ENCODE measurements at regions of chr11 and their contacts with region 1.

Region 1: DNA sequence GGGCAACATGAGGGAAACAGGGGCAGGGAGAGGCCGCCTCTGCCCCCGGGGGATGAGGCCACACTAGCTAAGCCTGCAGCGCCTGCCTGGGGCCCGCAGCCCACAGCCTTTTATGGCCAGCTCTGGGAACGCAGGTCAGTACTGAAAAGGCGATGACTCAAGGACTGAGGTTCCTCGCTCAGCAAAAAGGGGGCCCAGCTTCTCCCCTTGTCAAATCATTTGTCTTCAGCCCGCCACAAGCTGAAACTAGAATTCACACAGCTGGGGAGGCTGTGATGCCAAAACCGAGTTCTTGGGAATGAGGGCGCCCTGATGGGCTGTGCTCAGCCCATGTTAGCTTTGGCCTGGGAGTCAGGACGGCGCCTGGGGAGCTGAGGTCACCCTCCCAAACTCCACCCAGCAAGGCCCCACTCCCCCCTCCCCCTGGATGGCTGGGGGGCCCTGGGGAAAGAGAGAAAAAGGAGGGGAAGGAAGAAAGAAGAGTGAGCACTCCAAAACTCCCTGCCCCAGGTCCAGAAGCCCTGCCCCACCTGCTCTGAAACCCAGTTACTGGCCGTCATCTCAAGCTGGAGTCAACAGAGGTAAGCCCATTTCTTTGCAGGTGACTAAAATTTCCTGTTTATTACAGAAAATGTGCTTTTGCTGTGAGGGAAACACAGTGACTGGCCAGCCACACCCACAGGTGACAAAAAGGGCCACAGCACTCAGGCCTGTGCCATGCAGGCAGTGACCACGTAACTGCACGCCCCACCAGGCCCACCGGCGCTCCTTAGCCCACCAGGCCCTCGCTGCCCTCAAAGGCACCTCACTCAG is 13.7 kb downstream of the EHD1 start:
- DNase-seq: peak; percentile 84
- H3K4me3 Mint-ChIP-seq: peak overlapping the region; percentile 56
- H3K27ac Mint-ChIP-seq: peak overlapping the region; percentile 97
- H3K4me1 Mint-ChIP-seq: peaks cover 95% of the 10 kb centered on the region
- H3K27me3 Mint-ChIP-seq: no peaks in the 10 kb centered on the region

Region 2: GRCh38 chr11:64240394-64241174 is 624.1 kb before region 1 on chr11 and contains the start of gene FKBP2:
- CTCF ChIA-PET with region 1: no interaction called
- intact Hi-C with region 1: no loop called
- DNase-seq: peak; percentile 97
- H3K4me3 Mint-ChIP-seq: peak within 1 kb of the TSS; percentile 92
- H3K27ac Mint-ChIP-seq: peak within 1 kb of the TSS; percentile 98
- H3K4me1 Mint-ChIP-seq: peaks cover 35% of the 10 kb centered on the region
- H3K27me3 Mint-ChIP-seq: no peaks in the 10 kb centered on the region
- total RNA-seq, gene FKBP2: 17.2 to 20.0 TPM

Region 3: DNA sequence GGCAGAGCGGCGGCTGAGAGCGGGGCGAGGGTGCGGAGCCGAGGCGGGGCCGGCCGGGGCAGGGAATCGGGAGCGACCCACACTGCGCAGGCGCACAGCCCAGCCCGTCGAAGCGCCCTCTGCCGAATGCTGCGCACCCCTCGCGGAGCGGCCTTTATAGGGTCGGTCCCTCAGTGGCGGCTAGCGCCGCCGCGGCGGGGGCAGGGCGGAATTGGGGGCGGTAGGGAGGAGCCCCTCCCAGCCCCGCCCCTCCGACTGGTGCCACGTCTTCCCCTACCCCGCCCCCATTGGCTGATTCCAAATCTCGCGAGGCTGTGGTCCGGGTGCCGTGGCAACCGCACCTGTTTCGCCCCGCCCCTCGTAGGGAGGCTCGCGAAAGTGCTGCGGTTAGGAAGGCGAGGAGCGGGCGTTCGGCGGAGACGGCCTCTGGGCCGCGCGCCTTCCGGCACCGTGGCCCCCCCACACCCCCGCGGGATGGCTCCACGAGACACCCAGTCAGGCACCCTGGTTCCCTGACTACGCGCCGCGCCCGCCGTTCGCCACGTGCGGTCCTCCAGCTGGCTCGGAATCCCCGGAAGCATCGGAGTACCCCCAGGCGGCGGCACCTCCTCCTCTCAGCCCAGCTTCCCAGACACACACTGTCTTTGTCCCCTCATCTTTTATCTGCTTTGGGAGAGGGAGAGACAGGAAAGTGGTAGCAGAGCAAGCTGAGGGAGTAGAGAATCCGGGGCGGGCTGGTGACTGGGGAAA is 14.0 kb after region 1 on chr11 and contains the start of gene EHD1:
- CTCF ChIA-PET with region 1: interaction called, 992 read pairs
- intact Hi-C with region 1: loop called (anchors 1 kb)
- DNase-seq: peak; percentile 100
- H3K4me3 Mint-ChIP-seq: peak within 1 kb of the TSS; percentile 93
- H3K27ac Mint-ChIP-seq: peak within 1 kb of the TSS; percentile 96
- H3K4me1 Mint-ChIP-seq: peaks cover 58% of the 10 kb centered on the region
- H3K27me3 Mint-ChIP-seq: no peaks in the 10 kb centered on the region
- total RNA-seq, gene EHD1: 124 to 132 TPM

Region 4: DNA sequence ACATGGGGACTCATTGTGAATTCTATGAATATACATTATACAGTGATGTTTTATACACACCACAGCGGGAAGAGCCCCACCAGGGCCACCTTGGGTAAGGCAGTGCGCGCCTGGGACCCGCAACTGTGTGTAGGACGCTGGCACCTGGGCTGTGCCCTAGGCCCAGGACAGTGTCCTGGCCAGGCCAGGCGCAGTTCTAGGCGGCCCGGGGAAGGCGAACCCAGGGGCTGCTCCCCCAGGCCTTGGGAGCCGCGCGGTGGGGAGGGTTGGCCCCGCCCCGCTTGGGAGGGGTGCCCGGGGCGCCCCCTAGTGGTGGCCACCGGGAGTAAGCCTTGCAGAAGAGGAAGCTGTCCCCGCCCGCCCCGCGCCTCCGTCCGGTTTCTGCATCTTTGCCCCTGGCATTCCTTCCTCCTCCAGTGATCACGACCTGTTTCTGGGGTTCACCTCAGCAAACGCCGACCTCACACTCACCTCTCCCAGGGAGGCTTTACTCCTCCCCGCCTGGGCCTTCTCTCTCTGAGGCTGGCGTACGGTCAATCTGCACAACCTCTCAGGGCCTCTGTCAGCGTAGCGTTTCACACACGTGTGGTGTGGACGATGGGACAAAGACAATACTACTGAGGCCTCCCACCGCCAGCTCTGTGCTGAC is 23.2 kb after region 1 on chr11:
- CTCF ChIA-PET with region 1: interaction called, 992 read pairs
- intact Hi-C with region 1: loop called (anchors 1 kb)
- DNase-seq: peak; percentile 85
- H3K4me3 Mint-ChIP-seq: peak overlapping the region; percentile 68
- H3K27ac Mint-ChIP-seq: peak overlapping the region; percentile 73
- H3K4me1 Mint-ChIP-seq: peaks cover 33% of the 10 kb centered on the region
- H3K27me3 Mint-ChIP-seq: no peaks in the 10 kb centered on the region

Region 5: DNA sequence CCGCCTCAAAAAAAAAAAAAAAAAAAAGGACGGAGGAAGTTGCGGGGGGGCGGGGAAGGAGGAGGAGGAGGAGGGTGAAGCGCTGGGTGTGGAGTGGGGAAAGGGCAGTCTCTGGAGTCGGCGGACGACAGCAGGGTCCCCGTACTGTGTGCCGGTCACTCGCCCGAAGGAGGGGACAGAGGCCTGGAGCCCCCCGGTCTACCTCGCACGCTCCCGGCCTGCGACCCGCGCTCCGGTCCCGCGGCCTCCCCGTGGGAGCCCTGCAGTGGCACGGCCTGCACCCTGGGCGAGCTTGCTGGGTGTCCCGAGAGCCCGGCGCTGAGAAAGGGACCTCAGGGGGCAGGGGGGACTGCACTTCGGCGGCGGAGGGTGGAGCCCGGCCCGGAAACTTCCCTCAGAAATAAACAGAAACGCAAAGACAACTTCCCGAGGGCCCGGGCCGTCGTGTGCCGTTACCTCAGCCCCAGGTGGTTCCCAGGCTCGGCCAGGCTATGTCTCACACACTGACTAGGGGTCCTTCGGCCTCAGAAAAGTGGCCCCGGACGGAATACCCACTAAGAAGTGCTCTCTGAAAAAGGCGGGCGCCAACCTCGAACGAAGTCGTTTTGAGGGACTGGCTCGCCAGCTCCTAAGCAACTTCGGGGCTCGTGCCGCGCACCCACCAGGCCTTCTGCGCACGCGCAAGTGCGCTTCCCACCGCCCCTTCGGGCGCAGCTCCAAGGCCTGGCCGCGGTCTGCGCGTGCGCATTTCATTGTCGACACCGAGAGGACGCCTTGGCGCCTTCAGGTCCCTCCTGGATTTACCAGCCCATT is 106.9 kb after region 1 on chr11 and contains the start of gene MAJIN:
- CTCF ChIA-PET with region 1: no interaction called
- intact Hi-C with region 1: loop called (anchors 2 kb)
- DNase-seq: peak; percentile 89
- H3K4me3 Mint-ChIP-seq: peak within 1 kb of the TSS; percentile 69
- H3K27ac Mint-ChIP-seq: peak within 1 kb of the TSS; percentile 81
- H3K4me1 Mint-ChIP-seq: peaks cover 41% of the 10 kb centered on the region
- H3K27me3 Mint-ChIP-seq: no peaks in the 10 kb centered on the region
- total RNA-seq, gene MAJIN: 0.29 to 0.37 TPM

Region 6: GRCh38 chr11:65497141-65498041 is 632.7 kb after region 1 on chr11:
- CTCF ChIA-PET with region 1: no interaction called
- intact Hi-C with region 1: loop called (anchors 10 kb)
- DNase-seq: peak; percentile 99
- H3K4me3 Mint-ChIP-seq: no peak overlapping the region
- H3K27ac Mint-ChIP-seq: no peak overlapping the region
- H3K4me1 Mint-ChIP-seq: peaks cover 37% of the 10 kb centered on the region
- H3K27me3 Mint-ChIP-seq: no peaks in the 10 kb centered on the region

Region 7: GRCh38 chr11:66136752-66137123 is 1272.1 kb after region 1 on chr11:
- CTCF ChIA-PET with region 1: no interaction called
- intact Hi-C with region 1: no loop called
- DNase-seq: peak; percentile 47
- H3K4me3 Mint-ChIP-seq: no peak overlapping the region
- H3K27ac Mint-ChIP-seq: peak overlapping the region; percentile 66
- H3K4me1 Mint-ChIP-seq: peaks cover 66% of the 10 kb centered on the region
- H3K27me3 Mint-ChIP-seq: no peaks in the 10 kb centered on the region

Measured in activated naive CD4-positive, alpha-beta T cell treated with anti-CD3 and anti-CD28 coated beads for 36 hours (primary cell).